GM10248 (cell line): ENCODE measurements at regions of chr16 and their contacts with region 1.

Region 1: DNA sequence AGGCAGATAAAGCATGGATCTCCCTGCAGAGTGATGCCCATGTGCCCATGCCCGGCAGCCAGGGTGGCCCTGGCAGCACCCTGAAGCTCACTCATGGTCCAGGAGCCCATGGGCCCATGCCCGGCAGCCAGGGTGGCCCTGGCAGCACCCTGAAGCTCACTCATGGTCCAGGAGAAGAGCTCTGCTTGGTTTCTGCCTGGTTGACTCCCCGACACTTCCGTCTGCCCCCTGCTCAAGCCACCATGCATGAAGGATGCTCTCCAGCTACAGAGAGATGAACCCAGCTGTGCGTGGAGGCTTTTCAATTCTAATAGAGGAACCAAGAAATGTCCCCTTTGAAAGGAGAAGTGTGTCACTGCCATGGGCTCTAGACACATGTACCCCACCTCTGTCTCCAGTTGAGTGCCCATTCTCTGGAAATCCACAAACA is 8.7 kb downstream of the CCL17 start:
- DNase-seq: peak; percentile 82
- CTCF ChIP-seq: no peak

Region 2: GRCh38 chr16:57300387-57301125 is 112.8 kb before region 1 on chr16:
- CTCF ChIA-PET with region 1: interaction called, 454 read pairs
- POLR2A ChIA-PET with region 1: interaction called, 3 read pairs
- DNase-seq: peak; percentile 95
- CTCF ChIP-seq: peak; percentile 96

Region 3: GRCh38 chr16:57316390-57317017 is 96.8 kb before region 1 on chr16:
- CTCF ChIA-PET with region 1: interaction called, 26 read pairs
- POLR2A ChIA-PET with region 1: no interaction called
- DNase-seq: no peak
- CTCF ChIP-seq: no peak

Region 4: DNA sequence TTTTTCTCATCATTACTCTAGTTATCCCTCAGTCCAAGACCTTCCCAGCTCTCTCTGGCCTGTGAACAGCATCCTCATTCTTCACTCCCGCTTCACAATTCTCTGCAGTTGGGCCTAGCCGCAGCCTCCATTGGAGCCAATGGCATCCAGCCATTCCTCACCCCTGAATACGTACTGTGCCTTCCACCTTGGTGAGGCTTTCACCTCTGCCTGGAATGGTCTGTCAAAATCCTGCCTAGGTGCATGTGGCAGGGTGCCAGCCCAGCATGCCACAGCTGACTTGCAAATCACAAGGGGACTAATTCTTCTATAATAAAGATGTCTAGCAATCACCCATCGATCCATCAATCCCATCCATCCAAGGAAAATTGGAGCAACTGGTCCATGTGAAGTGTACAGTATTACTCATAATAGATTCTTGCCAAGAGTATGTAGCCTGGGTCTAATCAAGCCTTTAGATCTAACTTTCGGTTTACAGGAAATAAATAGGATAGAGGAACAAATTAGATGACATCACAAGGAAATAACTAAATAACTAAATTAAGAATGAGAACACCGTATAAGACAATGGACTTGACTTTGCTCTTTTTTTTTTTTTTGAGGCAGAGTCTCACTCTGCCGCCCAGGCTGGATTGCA is 46.1 kb before region 1 on chr16:
- CTCF ChIA-PET with region 1: interaction called, 87 read pairs
- POLR2A ChIA-PET with region 1: interaction called, 4 read pairs
- DNase-seq: no peak
- CTCF ChIP-seq: no peak

Region 5: GRCh38 chr16:57394444-57394843 is 18.9 kb before region 1 on chr16:
- CTCF ChIA-PET with region 1: interaction called, 43 read pairs
- POLR2A ChIA-PET with region 1: interaction called, 4 read pairs
- DNase-seq: no peak
- CTCF ChIP-seq: no peak

Region 6: DNA sequence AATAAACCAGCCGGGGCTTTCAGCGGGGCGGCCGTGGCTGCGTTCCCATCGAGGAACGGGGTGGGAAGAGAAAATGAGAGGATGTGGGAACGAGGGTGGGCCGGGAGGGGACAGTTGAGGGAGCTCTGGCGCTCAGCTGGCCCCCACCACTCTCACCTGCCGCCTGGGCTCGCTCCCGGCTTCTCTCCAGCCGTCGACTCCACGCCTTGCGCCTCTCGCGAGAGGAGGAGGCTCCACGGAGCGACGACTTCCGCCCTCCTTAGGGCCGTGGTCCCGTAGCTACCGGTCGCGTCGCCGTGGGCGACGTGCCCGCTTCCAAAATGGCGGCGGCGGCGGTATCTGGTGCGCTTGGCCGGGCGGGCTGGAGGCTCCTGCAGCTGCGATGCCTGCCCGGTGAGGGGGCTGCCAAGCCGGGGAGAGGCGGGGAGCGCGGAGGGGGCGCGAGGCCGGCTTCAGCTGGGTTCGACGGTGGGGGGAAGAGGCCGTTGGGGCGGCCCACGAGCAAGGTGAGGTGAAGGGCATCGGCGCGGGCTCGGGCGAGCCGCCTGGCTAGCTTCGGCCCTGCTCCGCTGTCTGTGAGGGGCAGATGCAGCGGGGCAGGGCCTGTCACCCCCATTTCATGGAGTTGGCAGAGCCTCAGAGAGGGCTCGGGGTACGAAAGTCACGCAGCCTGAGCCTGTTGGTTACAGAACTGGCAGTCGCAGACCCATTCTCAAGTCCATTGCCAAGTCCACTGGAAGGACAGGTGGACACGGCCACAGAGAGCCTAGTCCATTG is 34.1 kb after region 1 on chr16 and contains the starts of genes CIAPIN1 and COQ9:
- CTCF ChIA-PET with region 1: interaction called, 45 read pairs
- POLR2A ChIA-PET with region 1: interaction called, 4 read pairs
- DNase-seq: peak; percentile 98
- CTCF ChIP-seq: no peak

Region 7: DNA sequence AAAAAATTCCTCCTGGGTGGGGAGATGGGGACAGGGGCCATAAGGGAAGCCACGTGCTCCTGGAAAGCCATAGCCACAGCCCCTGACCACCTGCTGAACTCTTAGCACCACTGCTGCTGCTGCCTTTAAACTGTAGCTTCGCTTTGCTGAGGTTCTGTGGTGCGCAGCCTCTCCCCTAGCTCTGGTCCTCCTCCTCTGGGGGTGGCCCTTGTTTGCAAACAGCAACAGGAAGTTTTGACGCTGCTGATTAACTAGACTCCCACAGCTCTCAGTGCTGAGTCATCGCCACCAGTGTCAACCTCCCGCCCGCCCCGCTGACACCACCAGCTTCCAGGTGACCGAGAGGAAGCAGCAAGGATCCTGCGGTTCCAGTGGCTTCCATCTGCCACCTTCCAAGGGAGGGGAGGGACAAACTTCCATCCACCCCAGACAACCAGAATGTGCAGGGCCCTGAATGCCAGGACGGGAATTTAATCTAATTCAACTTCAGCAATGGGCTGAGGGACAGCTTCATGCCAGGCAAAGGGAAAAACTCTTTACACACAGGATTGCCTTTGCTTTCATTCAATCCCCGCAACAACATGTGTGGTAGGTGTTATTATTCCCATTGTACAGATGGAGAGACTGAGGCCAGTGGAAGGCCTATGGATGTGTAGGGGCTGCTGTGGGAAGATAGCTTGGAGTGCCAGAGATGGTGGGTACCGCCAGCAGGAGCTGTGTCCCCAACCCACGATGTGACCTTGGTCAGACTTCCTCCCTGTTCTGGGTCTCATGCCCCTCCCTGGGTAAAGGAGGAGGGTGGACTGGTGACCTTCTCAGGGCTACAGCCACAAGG is 397.1 kb after region 1 on chr16:
- CTCF ChIA-PET with region 1: no interaction called
- POLR2A ChIA-PET with region 1: no interaction called
- DNase-seq: peak; percentile 92
- CTCF ChIP-seq: no peak